Activated B cell treated with CpG ODN at 0.5 μM for 24 hours (primary cell): ENCODE measurements at regions of chr17 and their contacts with region 1.

Region 1: GRCh38 chr17:42388381-42389134 is at the start of gene STAT3:
- DNase-seq: peak; percentile 100
- ATAC-seq: peak; percentile 86
- H3K4me3 Mint-ChIP-seq: peak within 1 kb of the TSS; percentile 97
- H3K27ac Mint-ChIP-seq: peak within 1 kb of the TSS; percentile 100
- H3K4me1 Mint-ChIP-seq: peaks cover 56% of the 10 kb centered on the region
- H3K27me3 Mint-ChIP-seq: no peaks in the 10 kb centered on the region
- CTCF ChIP-seq: no peak
- total RNA-seq, gene STAT3: 211 and 233 TPM in 2 replicates

Region 2: GRCh38 chr17:41786227-41787020 is 602.1 kb before region 1 on chr17 and contains the start of gene JUP:
- CTCF ChIA-PET with region 1: no interaction called
- POLR2A ChIA-PET with region 1: no interaction called
- intact Hi-C with region 1: loop called (anchors 10 kb)
- DNase-seq: peak; percentile 98
- ATAC-seq: peak; percentile 94
- H3K4me3 Mint-ChIP-seq: peak within 1 kb of the TSS; percentile 78
- H3K27ac Mint-ChIP-seq: peak within 1 kb of the TSS; percentile 75
- H3K4me1 Mint-ChIP-seq: peaks cover 57% of the 10 kb centered on the region
- H3K27me3 Mint-ChIP-seq: no peaks in the 10 kb centered on the region
- CTCF ChIP-seq: no peak
- total RNA-seq, gene JUP: 27.3 and 31.1 TPM in 2 replicates

Region 3: DNA sequence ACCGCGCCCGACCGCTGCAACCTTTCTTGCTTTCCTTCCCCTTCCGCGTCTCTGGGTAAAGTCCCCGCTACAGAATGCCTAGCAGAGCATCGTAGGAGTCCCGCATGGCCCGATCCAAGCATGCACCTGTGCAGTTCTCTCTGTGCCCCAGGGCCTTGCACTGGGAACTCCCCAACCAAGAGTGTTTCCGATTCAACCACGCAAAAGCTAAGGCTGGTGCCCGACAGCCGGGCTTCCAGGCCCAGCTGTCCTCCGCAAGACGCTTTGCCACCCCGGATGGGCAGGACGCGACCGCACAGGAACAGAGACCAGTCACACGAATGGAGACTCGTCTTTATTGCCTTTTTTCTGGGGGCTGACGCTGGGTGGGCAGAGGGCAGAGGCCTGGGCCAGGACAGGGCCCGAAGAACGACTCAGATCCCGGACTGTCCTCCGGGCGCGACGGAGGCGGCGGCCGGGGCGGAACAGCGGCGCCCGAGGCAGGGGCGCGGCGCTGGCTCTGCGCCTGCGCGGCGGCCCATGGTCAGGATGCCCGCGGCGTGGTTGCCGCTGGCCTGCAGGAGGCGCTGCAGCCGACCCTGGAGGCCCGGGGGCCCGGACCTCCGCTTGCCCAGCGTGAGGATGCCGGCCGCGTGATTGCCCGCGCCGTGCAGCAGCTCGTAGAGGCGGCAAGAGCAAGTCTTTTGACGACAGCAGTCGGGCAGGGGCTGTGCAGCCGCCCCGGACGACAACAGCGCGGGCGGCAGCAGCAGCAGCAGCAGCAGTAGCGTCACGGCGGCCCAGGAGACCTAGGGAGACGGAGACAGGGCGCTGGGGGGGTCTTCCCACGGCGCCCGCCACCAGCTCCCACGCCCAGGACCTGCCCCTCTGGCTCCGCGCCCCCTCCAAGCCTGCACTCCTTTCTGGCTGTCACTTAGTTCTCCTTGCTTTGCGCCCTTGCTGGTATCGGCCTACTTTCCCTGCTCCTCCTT is 204.5 kb before region 1 on chr17:
- CTCF ChIA-PET with region 1: no interaction called
- POLR2A ChIA-PET with region 1: no interaction called
- intact Hi-C with region 1: loop called (anchors 5 kb)
- DNase-seq: peak; percentile 87
- ATAC-seq: peak; percentile 64
- H3K4me3 Mint-ChIP-seq: peak overlapping the region; percentile 93
- H3K27ac Mint-ChIP-seq: peak overlapping the region; percentile 95
- H3K4me1 Mint-ChIP-seq: peaks cover 56% of the 10 kb centered on the region
- H3K27me3 Mint-ChIP-seq: no peaks in the 10 kb centered on the region
- CTCF ChIP-seq: peak; percentile 33

Region 4: DNA sequence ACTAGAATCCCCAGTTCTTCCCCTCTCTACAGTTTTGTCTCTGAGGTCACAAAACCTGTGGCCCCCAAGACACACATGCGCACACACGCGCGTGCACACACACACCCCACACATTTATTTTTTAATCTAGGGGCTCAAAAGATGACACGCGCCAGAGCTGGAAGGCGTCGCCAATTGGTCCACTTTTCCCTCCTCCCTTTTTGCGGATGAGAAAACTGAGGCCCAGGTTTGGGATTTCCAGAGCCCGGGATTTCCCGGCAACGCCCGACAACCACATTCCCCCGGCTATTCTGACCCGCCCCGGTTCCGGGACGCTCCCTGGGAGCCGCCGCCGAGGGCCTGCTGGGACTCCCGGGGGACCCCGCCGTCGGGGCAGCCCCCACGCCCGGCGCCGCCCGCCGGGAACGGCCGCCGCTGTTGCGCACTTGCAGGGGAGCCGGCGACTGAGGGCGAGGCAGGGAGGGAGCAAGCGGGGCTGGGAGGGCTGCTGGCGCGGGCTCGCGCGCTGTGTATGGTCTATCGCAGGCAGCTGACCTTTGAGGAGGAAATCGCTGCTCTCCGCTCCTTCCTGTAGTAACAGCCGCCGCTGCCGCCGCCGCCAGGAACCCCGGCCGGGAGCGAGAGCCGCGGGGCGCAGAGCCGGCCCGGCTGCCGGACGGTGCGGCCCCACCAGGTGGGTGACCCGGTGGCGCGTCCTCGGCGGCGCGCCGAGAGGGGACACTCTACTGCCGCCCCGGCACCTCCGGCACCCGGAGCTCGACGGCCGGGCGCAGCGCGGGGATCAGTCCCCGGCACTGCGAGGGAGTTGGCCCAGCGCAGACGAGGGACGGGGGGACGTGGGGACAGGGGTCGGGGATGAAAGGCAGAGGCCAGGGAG is 100.4 kb before region 1 on chr17 and contains the start of gene STAT5A:
- CTCF ChIA-PET with region 1: no interaction called
- POLR2A ChIA-PET with region 1: interaction called, 21 read pairs
- intact Hi-C with region 1: loop called (anchors 1 kb)
- DNase-seq: peak; percentile 70
- ATAC-seq: peak; percentile 77
- H3K4me3 Mint-ChIP-seq: peak within 1 kb of the TSS; percentile 94
- H3K27ac Mint-ChIP-seq: peak within 1 kb of the TSS; percentile 97
- H3K4me1 Mint-ChIP-seq: peaks cover 51% of the 10 kb centered on the region
- H3K27me3 Mint-ChIP-seq: no peaks in the 10 kb centered on the region
- CTCF ChIP-seq: no peak
- total RNA-seq, gene STAT5A: 136 and 140 TPM in 2 replicates

Region 5: GRCh38 chr17:42322382-42323267 is 65.9 kb before region 1 on chr17:
- CTCF ChIA-PET with region 1: interaction called, 4 read pairs
- POLR2A ChIA-PET with region 1: interaction called, 4 read pairs
- intact Hi-C with region 1: loop called (anchors 5 kb)
- DNase-seq: peak; percentile 80
- ATAC-seq: peak; percentile 97
- H3K4me3 Mint-ChIP-seq: no peak overlapping the region
- H3K27ac Mint-ChIP-seq: peak overlapping the region; percentile 63
- H3K4me1 Mint-ChIP-seq: peaks cover 35% of the 10 kb centered on the region
- H3K27me3 Mint-ChIP-seq: no peaks in the 10 kb centered on the region
- CTCF ChIP-seq: peak; percentile 90

Region 6: DNA sequence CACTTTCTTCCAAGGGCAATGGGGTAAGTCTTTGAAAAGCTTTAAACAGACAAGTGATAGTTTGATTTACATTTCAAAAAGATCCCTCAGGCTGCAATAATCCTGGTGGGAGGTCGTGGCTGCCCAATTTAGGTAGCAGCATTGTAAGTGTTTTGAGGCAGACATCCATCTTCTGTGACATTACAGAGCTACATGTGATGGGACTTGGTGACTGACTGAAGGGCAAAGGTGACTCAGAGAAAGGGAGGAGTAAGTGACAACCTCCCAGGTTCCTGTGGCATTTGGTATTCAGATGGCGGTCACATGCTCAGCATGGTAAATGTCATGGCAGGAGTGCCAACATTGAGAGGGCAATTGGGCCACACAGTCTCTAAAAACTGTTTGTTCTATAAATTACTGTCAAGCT is 26.8 kb before region 1 on chr17:
- CTCF ChIA-PET with region 1: no interaction called
- POLR2A ChIA-PET with region 1: interaction called, 12 read pairs
- intact Hi-C with region 1: no loop called
- DNase-seq: no peak
- ATAC-seq: peak; percentile 58
- H3K4me3 Mint-ChIP-seq: no peak overlapping the region
- H3K27ac Mint-ChIP-seq: no peak overlapping the region
- H3K4me1 Mint-ChIP-seq: peaks cover 69% of the 10 kb centered on the region
- H3K27me3 Mint-ChIP-seq: no peaks in the 10 kb centered on the region
- CTCF ChIP-seq: no peak

Region 7: DNA sequence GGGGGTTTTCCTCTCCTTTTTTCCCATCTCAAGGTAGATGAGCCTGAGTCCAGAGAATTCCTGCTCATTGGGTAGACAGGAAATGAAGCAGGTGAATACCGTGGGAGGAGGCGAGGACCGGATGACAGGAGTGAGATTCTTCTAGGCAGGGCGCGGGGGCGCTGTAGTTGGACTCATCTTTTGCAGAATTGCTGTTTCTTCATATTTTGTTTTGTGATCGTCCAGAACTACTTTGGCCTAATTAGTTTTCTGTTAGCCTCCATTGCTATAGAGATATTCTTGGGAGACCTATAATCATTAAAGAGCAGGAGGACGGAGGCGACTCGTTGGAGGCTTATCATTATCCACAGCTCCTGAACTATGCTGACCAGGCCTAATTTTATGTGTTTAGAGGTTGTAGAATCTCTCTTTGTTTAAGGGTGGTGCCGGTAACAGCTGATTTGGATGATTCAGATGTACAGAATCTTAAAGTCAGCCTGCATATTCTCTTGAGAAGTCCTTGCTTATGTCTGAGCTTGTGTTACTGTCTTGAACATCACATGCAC is 70.8 kb after region 1 on chr17:
- CTCF ChIA-PET with region 1: interaction called, 3 read pairs
- POLR2A ChIA-PET with region 1: interaction called, 12 read pairs
- intact Hi-C with region 1: loop called (anchors 2 kb)
- DNase-seq: no peak
- ATAC-seq: no peak
- H3K4me3 Mint-ChIP-seq: peak overlapping the region; percentile 98
- H3K27ac Mint-ChIP-seq: peak overlapping the region; percentile 95
- H3K4me1 Mint-ChIP-seq: peaks cover 66% of the 10 kb centered on the region
- H3K27me3 Mint-ChIP-seq: no peaks in the 10 kb centered on the region
- CTCF ChIP-seq: no peak